ENCODE measurements at regions of chr6 and their contacts with region 1.

Region 1: GRCh38 chr6:49531774-49532569 is 18.5 kb upstream of the C6orf141 start:
- H3K4me3 Mint-ChIP-seq: peak overlapping the region; percentile 34
- H3K27ac Mint-ChIP-seq: no peak overlapping the region
- H3K4me1 Mint-ChIP-seq: no peaks in the 10 kb centered on the region
- H3K27me3 Mint-ChIP-seq: peaks cover 4% of the 10 kb centered on the region

Region 2: GRCh38 chr6:48826901-48827701 is 704.9 kb before region 1 on chr6:
- intact Hi-C with region 1: no loop called
- H3K4me3 Mint-ChIP-seq: no peak overlapping the region
- H3K27ac Mint-ChIP-seq: no peak overlapping the region
- H3K4me1 Mint-ChIP-seq: no peaks in the 10 kb centered on the region
- H3K27me3 Mint-ChIP-seq: no peaks in the 10 kb centered on the region

Region 3: DNA sequence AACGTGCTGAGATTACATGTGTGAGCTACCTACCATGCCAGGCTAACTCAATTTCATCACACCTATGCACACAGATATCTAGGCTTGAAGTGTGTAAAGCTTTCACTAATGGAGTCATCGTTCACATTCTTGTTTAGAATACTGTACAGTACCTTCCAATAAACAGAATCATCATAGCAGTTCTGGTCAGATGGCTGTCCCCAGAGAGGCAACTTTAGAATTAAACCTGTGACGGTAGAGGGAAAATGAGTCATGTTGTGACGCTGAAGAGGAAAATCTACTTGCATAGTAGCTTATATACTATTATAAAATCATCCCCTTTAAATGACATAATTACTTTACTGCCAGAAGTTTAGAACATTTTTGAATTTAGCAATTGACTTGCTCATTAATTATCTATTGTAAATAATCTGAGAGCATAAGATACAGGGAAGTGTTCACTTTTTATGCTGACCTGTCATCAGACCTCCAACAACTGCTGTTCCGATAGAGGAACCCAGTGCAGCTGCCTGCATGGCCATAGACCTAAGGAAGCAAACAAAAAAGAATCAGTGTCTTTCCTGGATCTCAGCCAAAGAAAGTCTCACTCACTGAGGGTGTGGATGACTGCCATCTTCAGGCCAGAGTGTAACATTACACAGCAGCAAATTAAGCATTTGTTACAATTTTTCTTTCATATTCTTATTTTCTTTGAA is 74.9 kb after region 1 on chr6:
- intact Hi-C with region 1: loop called (anchors 1 kb)
- H3K4me3 Mint-ChIP-seq: no peak overlapping the region
- H3K27ac Mint-ChIP-seq: no peak overlapping the region
- H3K4me1 Mint-ChIP-seq: no peaks in the 10 kb centered on the region
- H3K27me3 Mint-ChIP-seq: peaks cover 2% of the 10 kb centered on the region

Region 4: GRCh38 chr6:49849213-49849907 is 317.4 kb after region 1 on chr6:
- intact Hi-C with region 1: loop called (anchors 1 kb)
- H3K4me3 Mint-ChIP-seq: no peak overlapping the region
- H3K27ac Mint-ChIP-seq: no peak overlapping the region
- H3K4me1 Mint-ChIP-seq: no peaks in the 10 kb centered on the region
- H3K27me3 Mint-ChIP-seq: no peaks in the 10 kb centered on the region

Measured in dendritic cell treated with granulocyte-macrophage colony-stimulating factor and Interleukin-4, amounts not matched to agents 40 ng/mL and 50 ng/mL, for 4 days (primary cell).